PC-9 (cell line): ENCODE measurements at regions of chr7 and their contacts with region 1.

Region 1: GRCh38 chr7:121366852-121367431 is 29.2 kb downstream of the FAM3C start:
- DNase-seq: peak; percentile 15 to 48
- H3K4me3 ChIP-seq: no peak overlapping the region
- H3K27ac ChIP-seq: peak overlapping the region; percentile 38
- H3K4me1 ChIP-seq: peaks cover 16% of the 10 kb centered on the region; the same call in 1 of the 2 replicates
- H3K27me3 ChIP-seq: no peaks in the 10 kb centered on the region
- CTCF ChIP-seq: peak; percentile 94

Region 2: GRCh38 chr7:121437456-121438127 is 70.7 kb after region 1 on chr7:
- CTCF ChIA-PET with region 1: interaction called, 7 read pairs
- POLR2A ChIA-PET with region 1: no interaction called
- intact Hi-C with region 1: loop called (anchors 1 kb)
- DNase-seq: peak in 1 of 2 experiments; percentile 72
- H3K4me3 ChIP-seq: no peak overlapping the region
- H3K27ac ChIP-seq: no peak overlapping the region
- H3K4me1 ChIP-seq: peaks cover 32% of the 10 kb centered on the region
- H3K27me3 ChIP-seq: no peaks in the 10 kb centered on the region
- CTCF ChIP-seq: no peak